IMR-90 (cell line): ENCODE measurements at regions of chr10 and their contacts with region 1.

Region 1: GRCh38 chr10:103918053-103918846 is at the start of gene STN1:
- DNase-seq: peak; percentile 96
- ATAC-seq: peak; percentile 97
- H3K4me3 ChIP-seq: peak within 1 kb of the TSS; percentile 88
- H3K27ac ChIP-seq: peak within 1 kb of the TSS; percentile 96
- H3K4me1 ChIP-seq: peaks cover 6% of the 10 kb centered on the region
- H3K27me3 ChIP-seq: no peaks in the 10 kb centered on the region
- CTCF ChIP-seq: 0 out of 2 replicates have a peak, but pooled peaks have one; percentile 13
- POLR2A ChIP-seq: peak; percentile 85
- RAD21 ChIP-seq: no peak
- total RNA-seq, gene STN1: 28.6 and 32.3 TPM in 2 replicates

Region 2: GRCh38 chr10:103452506-103453230 is 465.6 kb before region 1 on chr10:
- CTCF ChIA-PET with region 1: no interaction called
- POLR2A ChIA-PET with region 1: interaction called, 12 read pairs
- dilution Hi-C with region 1: no loop called
- in situ Hi-C with region 1: no loop called
- intact Hi-C with region 1: no loop called
- DNase-seq: no peak
- ATAC-seq: peak; percentile 2
- H3K4me3 ChIP-seq: peak overlapping the region; percentile 49
- H3K27ac ChIP-seq: peak overlapping the region; percentile 25; the same call in 1 of the 2 replicates
- H3K4me1 ChIP-seq: peaks cover 11% of the 10 kb centered on the region; the same call in 1 of the 2 replicates
- H3K27me3 ChIP-seq: no peaks in the 10 kb centered on the region
- CTCF ChIP-seq: no peak
- POLR2A ChIP-seq: no peak
- RAD21 ChIP-seq: no peak

Region 3: DNA sequence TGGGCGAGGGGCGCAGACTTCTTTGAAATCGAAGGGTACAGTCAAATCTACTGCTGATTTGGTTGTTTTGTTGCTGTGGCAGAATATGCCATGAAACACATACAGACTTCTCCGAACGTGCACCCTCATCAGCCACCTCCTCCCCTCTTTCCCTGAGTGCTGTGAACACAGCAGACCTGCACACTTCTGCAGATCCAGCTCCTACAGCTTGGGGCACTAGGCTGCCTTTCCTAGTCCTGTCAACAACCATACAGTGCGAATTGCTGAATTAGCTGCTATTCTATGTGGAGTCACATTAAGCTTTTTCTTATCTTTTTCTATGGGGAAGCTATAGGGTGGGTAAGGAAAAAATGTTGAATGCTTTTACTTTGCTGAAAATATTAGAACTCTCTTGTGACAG is 109.9 kb after region 1 on chr10:
- CTCF ChIA-PET with region 1: no interaction called
- POLR2A ChIA-PET with region 1: no interaction called
- dilution Hi-C with region 1: no loop called
- in situ Hi-C with region 1: no loop called
- intact Hi-C with region 1: no loop called
- DNase-seq: peak; percentile 23
- ATAC-seq: peak; percentile 85
- H3K4me3 ChIP-seq: no peak overlapping the region
- H3K27ac ChIP-seq: no peak overlapping the region
- H3K4me1 ChIP-seq: no peaks in the 10 kb centered on the region
- H3K27me3 ChIP-seq: no peaks in the 10 kb centered on the region
- CTCF ChIP-seq: peak; percentile 23; the same call in 1 of the 2 replicates
- POLR2A ChIP-seq: no peak
- RAD21 ChIP-seq: no peak